Tibial artery (tissue), 4 donors: ENCODE measurements at regions of chr3 and their contacts with region 1.

Region 1: GRCh38 chr3:197168606-197169005 is 129.8 kb downstream of the DLG1 start:
- DNase-seq: no peak
- H3K4me3 ChIP-seq: no peak overlapping the region
- H3K27ac ChIP-seq: no peak overlapping the region
- H3K4me1 ChIP-seq: no peaks in the 10 kb centered on the region
- H3K27me3 ChIP-seq: no peaks in the 10 kb centered on the region
- CTCF ChIP-seq: no peak

Region 2: GRCh38 chr3:197151569-197151968 is 17.0 kb before region 1 on chr3:
- intact Hi-C with region 1: loop called (anchors 1 kb)
- DNase-seq: peak in 1 of 2 donors; percentile 49
- H3K4me3 ChIP-seq: no peak overlapping the region
- H3K27ac ChIP-seq: no peak overlapping the region
- H3K4me1 ChIP-seq: no peaks in the 10 kb centered on the region
- H3K27me3 ChIP-seq: no peaks in the 10 kb centered on the region
- CTCF ChIP-seq: no peak